ENCODE measurements at regions of chr7 and their contacts with region 1.

Region 1: DNA sequence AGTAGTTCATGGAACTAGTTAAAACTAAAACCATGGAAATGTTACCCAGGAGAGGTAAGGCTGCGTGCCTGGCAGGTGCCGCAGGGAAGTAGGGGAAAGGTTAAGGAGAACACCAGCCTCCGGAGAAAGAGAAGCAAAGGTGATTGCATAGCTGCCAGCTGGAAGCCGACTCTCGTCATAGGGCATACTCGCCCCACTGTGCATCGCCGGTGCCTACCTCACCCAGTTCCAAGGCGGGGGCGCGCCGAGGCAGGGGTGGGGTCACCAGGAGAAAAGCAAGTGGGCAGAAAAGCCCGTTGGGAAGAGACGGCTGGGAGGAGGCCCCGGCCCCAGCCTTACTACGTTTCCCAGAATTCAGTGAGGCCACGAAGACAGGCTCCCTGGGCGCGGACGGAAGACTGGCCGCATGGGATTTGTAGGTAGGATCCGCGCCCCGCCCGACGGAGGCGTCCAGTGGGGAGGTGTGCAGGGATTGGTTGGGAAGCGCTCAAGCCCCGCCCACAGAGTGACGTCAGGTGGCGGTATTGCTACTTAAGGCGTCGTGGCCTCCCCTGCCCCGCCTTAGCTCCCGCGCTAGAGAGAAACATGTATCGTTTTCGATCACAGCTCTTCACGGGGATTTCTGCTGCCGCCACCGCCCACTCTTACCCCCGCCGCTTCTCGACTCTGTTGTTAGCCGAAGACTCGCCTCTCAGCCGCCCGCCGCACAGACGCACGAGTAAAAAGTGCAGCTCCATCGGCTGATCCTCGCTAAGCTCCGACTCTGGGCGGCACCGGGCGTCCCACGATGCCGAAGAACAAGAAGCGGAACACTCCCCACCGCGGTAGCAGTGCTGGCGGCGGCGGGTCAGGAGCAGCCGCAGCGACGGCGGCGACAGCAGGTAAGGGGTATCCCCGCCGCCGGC is at the start of gene IFRD1:
- DNase-seq: peak; percentile 99
- H3K4me3 ChIP-seq: peak within 1 kb of the TSS; percentile 82
- H3K4me3 Mint-ChIP-seq: peak within 1 kb of the TSS; percentile 95
- H3K27ac Mint-ChIP-seq: peak within 1 kb of the TSS; percentile 98
- H3K4me1 ChIP-seq: peaks cover 9% of the 10 kb centered on the region
- H3K4me1 Mint-ChIP-seq: peaks cover 30% of the 10 kb centered on the region
- H3K27me3 ChIP-seq: no peaks in the 10 kb centered on the region
- H3K27me3 Mint-ChIP-seq: no peaks in the 10 kb centered on the region
- CTCF ChIP-seq: no peak
- total RNA-seq, gene IFRD1: 78.8 and 83.2 TPM in 2 replicates

Region 2: GRCh38 chr7:112248598-112248997 is 201.6 kb before region 1 on chr7:
- CTCF ChIA-PET with region 1: no interaction called
- POLR2A ChIA-PET with region 1: no interaction called
- intact Hi-C with region 1: no loop called
- DNase-seq: no peak
- H3K4me3 ChIP-seq: no peak overlapping the region
- H3K4me3 Mint-ChIP-seq: no peak overlapping the region
- H3K27ac Mint-ChIP-seq: no peak overlapping the region
- H3K4me1 ChIP-seq: 0 out of 2 replicates have a peak, but pooled peaks cover 5% of the 10 kb centered on the region
- H3K4me1 Mint-ChIP-seq: no peaks in the 10 kb centered on the region
- H3K27me3 ChIP-seq: no peaks in the 10 kb centered on the region
- H3K27me3 Mint-ChIP-seq: no peaks in the 10 kb centered on the region
- CTCF ChIP-seq: no peak

Region 3: GRCh38 chr7:112262036-112262435 is 188.1 kb before region 1 on chr7:
- CTCF ChIA-PET with region 1: no interaction called
- POLR2A ChIA-PET with region 1: interaction called, 10 read pairs
- intact Hi-C with region 1: no loop called
- DNase-seq: no peak
- H3K4me3 ChIP-seq: no peak overlapping the region
- H3K4me3 Mint-ChIP-seq: no peak overlapping the region
- H3K27ac Mint-ChIP-seq: no peak overlapping the region
- H3K4me1 ChIP-seq: no peaks in the 10 kb centered on the region
- H3K4me1 Mint-ChIP-seq: no peaks in the 10 kb centered on the region
- H3K27me3 ChIP-seq: no peaks in the 10 kb centered on the region
- H3K27me3 Mint-ChIP-seq: no peaks in the 10 kb centered on the region
- CTCF ChIP-seq: no peak

Region 4: DNA sequence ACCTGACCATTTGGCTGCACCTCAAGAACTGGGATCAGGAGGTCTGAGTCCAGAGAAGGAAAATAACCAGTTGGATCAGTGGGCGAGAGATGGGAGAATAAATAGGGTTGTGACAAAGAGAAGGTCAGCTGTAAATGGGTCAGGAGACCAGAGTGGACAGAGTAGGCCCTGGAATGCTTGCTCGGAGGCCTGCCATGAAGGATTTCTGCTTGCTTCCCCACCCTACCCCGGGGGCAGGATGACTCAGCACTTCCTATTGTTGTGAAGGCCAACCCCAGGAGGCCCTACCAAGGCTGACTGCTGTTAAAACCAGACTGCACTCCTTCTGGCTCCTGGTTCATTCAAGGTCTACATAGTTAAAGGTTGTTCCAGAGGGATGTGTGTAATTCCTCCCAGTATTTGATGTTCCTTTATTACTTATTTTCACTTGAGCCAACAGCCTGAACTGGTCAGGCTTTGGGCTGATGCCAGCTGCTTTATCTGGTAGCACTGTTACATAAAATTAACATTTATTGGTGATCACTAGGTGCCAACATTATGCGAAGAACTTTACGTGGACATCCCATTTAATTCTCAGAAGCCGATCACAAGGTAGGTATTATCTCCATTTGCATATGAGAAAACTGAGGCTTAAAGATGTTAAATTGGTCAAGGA is 27.2 kb before region 1 on chr7:
- CTCF ChIA-PET with region 1: interaction called, 4 read pairs
- POLR2A ChIA-PET with region 1: interaction called, 5 read pairs
- intact Hi-C with region 1: loop called (anchors 1 kb)
- DNase-seq: peak; percentile 84 to 91
- H3K4me3 ChIP-seq: no peak overlapping the region
- H3K4me3 Mint-ChIP-seq: peak overlapping the region; percentile 12
- H3K27ac Mint-ChIP-seq: peak overlapping the region; percentile 59
- H3K4me1 ChIP-seq: peaks cover 15% of the 10 kb centered on the region
- H3K4me1 Mint-ChIP-seq: peaks cover 21% of the 10 kb centered on the region
- H3K27me3 ChIP-seq: no peaks in the 10 kb centered on the region
- H3K27me3 Mint-ChIP-seq: no peaks in the 10 kb centered on the region
- CTCF ChIP-seq: no peak

Region 5: GRCh38 chr7:112939574-112940314 is 489.6 kb after region 1 on chr7:
- CTCF ChIA-PET with region 1: no interaction called
- POLR2A ChIA-PET with region 1: interaction called, 11 read pairs
- intact Hi-C with region 1: loop called (anchors 1 kb)
- DNase-seq: peak; percentile 99
- H3K4me3 ChIP-seq: peak overlapping the region; percentile 87
- H3K4me3 Mint-ChIP-seq: peak overlapping the region; percentile 89
- H3K27ac Mint-ChIP-seq: peak overlapping the region; percentile 91
- H3K4me1 ChIP-seq: peaks cover 6% of the 10 kb centered on the region
- H3K4me1 Mint-ChIP-seq: no peaks in the 10 kb centered on the region
- H3K27me3 ChIP-seq: no peaks in the 10 kb centered on the region
- H3K27me3 Mint-ChIP-seq: no peaks in the 10 kb centered on the region
- CTCF ChIP-seq: no peak

Region 6: GRCh38 chr7:113118074-113118959 is 668.2 kb after region 1 on chr7 and contains the start of gene SMIM30:
- CTCF ChIA-PET with region 1: no interaction called
- POLR2A ChIA-PET with region 1: interaction called, 11 read pairs
- intact Hi-C with region 1: no loop called
- DNase-seq: peak; percentile 88
- H3K4me3 ChIP-seq: peak within 1 kb of the TSS; percentile 49
- H3K4me3 Mint-ChIP-seq: peak within 1 kb of the TSS; percentile 97
- H3K27ac Mint-ChIP-seq: peak within 1 kb of the TSS; percentile 93
- H3K4me1 ChIP-seq: peaks cover 6% of the 10 kb centered on the region
- H3K4me1 Mint-ChIP-seq: no peaks in the 10 kb centered on the region
- H3K27me3 ChIP-seq: no peaks in the 10 kb centered on the region
- H3K27me3 Mint-ChIP-seq: no peaks in the 10 kb centered on the region
- CTCF ChIP-seq: peak in 1 of 2 experiments; percentile 4
- total RNA-seq, gene SMIM30: 29.8 and 29.9 TPM in 2 replicates

Measured in Caco-2 (cell line).